OCI-LY7 (cell line): ENCODE measurements at regions of chr5 and their contacts with region 1.

Region 1: DNA sequence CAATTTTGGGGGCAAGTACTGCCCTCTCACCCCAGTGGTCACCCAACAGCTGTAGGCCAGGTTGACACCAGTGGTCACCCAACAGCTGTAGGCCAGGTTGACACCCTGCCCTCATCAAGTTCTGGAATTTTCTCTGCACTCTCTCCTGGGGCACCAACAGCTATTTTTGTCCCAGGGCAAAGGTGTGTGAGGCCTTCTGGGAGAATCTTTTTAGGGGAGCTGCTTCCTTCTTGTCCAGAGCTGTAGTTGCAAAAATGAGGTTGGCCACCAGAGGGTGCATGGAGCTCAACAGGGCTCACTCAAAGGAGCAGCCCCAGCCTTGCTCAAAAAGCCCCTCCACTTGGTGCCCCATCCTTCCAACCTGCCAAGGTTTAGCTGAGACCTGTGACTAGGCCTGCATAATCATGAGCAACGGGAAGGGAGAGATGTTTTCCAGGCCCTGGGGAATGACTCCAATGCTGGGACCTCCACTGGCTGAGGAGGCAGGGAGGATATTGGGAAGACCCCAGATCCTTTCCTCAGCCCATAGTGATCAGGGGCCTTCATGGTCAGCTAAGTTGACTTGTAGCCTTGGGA is 10.6 kb upstream of the P4HA2 start:
- DNase-seq: peak; percentile 82
- H3K4me3 ChIP-seq: no peak overlapping the region
- H3K27ac ChIP-seq: no peak overlapping the region
- H3K4me1 ChIP-seq: peaks cover 33% of the 10 kb centered on the region
- CTCF ChIP-seq: peak; percentile 92

Region 2: DNA sequence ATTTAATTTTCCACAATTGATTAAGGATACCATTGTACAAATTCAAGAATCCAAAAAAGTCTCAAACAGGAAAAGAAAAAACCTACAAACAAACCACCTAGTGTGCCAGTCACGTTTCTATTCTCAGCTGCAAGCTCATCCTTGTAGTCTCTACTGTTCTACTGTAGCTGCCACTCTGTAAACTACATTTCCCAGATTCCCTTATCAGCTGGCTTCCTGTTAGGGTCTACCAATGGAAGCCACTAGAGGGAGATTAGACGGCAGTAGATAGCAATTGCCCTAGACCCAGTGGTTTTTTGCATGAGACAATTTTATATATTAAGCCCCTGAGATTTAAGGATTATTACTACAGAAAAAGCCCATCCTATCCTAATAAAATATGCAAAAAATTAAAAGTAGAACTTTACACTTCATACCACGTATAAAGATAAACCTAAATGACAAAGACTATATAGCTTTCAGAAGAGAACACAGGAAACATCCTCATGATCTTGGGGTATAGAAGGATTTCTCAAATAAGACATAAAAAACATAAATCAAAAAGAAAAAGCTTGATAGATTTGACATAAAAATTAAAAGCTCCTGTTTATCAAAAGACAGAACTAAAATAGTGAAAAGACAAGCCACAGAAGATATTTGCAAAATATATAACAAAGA is 48.0 kb before region 1 on chr5:
- CTCF ChIA-PET with region 1: no interaction called
- POLR2A ChIA-PET with region 1: interaction called, 4 read pairs
- intact Hi-C with region 1: loop called (anchors 5 kb)
- DNase-seq: peak; percentile 85
- H3K4me3 ChIP-seq: no peak overlapping the region
- H3K27ac ChIP-seq: no peak overlapping the region
- H3K4me1 ChIP-seq: peaks cover 27% of the 10 kb centered on the region
- CTCF ChIP-seq: peak; percentile 90

Region 3: GRCh38 chr5:132962429-132963021 is 724.3 kb after region 1 on chr5:
- CTCF ChIA-PET with region 1: no interaction called
- POLR2A ChIA-PET with region 1: no interaction called
- intact Hi-C with region 1: no loop called
- DNase-seq: peak; percentile 56
- H3K4me3 ChIP-seq: peak overlapping the region; percentile 80
- H3K27ac ChIP-seq: peak overlapping the region; percentile 68
- H3K4me1 ChIP-seq: peaks cover 21% of the 10 kb centered on the region
- CTCF ChIP-seq: no peak